Ovary (tissue), 10 donors: ENCODE measurements at regions of chr14 and their contacts with region 1.

Region 1: DNA sequence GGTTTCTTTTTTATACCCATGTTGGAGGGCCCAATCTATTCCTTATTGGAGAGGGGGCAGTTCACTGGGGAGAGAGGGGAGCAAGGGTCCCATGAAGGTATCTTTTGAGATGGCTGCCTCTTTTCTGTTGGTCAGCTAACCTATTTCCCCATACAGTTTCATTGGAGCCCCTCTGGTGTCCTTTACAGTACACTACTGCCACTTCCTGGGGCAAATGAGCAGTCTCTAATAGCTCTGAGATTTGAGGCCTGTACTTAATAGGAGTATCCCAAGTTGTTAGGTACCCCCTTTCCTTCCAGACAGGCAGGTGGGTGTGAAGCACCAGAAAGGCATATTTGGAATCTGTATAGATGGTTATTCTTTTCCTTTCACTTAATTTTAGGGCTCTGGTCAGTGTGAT is 41.3 kb upstream of the RNU6-8 start:
- DNase-seq: no peak
- H3K4me3 ChIP-seq: no peak overlapping the region
- H3K27ac ChIP-seq: no peak overlapping the region
- H3K4me1 ChIP-seq: no peaks in the 10 kb centered on the region
- H3K27me3 ChIP-seq: no peaks in the 10 kb centered on the region
- CTCF ChIP-seq: no peak
- EP300 ChIP-seq: no peak
- POLR2A ChIP-seq: no peak

Region 2: GRCh38 chr14:30402846-30403245 is 1841.6 kb before region 1 on chr14:
- intact Hi-C with region 1: loop called in 1 of 4 experiments (anchors 5 kb)
- DNase-seq: no peak
- H3K4me3 ChIP-seq: no peak overlapping the region
- H3K27ac ChIP-seq: no peak overlapping the region
- H3K4me1 ChIP-seq: no peaks in the 10 kb centered on the region
- H3K27me3 ChIP-seq: no peaks in the 10 kb centered on the region
- CTCF ChIP-seq: no peak
- EP300 ChIP-seq: no peak
- POLR2A ChIP-seq: no peak

Region 3: DNA sequence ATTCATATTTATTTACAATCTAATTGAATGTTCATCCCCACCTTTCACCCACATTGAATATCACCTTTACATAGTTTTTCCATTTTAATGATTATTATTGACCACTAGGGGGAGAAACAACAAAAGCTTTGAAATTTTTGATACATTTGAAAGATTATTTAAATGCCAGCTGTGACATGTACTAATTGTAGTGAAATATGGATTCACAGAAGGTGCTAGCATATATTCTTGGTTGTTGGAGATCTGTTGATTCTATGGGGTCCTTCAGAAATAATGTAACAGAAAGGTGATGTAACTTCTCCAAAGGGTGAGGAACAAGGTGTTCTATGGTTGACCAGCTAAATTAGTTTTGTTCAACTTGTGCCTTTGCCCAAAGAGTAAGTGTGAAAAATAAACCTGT is 734.2 kb before region 1 on chr14:
- intact Hi-C with region 1: loop called in 1 of 4 experiments (anchors 10 kb)
- DNase-seq: no peak
- H3K4me3 ChIP-seq: no peak overlapping the region
- H3K27ac ChIP-seq: no peak overlapping the region
- H3K4me1 ChIP-seq: peaks cover 8% of the 10 kb centered on the region
- H3K27me3 ChIP-seq: no peaks in the 10 kb centered on the region
- CTCF ChIP-seq: peak; percentile 3 to 46 (median 19)
- EP300 ChIP-seq: no peak
- POLR2A ChIP-seq: no peak

Region 4: GRCh38 chr14:31926123-31926522 is 318.3 kb before region 1 on chr14:
- intact Hi-C with region 1: loop called in 1 of 4 experiments (anchors 10 kb)
- DNase-seq: no peak
- H3K4me3 ChIP-seq: no peak overlapping the region
- H3K27ac ChIP-seq: no peak overlapping the region
- H3K4me1 ChIP-seq: peaks cover 2% of the 10 kb centered on the region
- H3K27me3 ChIP-seq: no peaks in the 10 kb centered on the region
- CTCF ChIP-seq: peak in 1 of 3 donors; percentile 30
- EP300 ChIP-seq: no peak
- POLR2A ChIP-seq: no peak

Region 5: DNA sequence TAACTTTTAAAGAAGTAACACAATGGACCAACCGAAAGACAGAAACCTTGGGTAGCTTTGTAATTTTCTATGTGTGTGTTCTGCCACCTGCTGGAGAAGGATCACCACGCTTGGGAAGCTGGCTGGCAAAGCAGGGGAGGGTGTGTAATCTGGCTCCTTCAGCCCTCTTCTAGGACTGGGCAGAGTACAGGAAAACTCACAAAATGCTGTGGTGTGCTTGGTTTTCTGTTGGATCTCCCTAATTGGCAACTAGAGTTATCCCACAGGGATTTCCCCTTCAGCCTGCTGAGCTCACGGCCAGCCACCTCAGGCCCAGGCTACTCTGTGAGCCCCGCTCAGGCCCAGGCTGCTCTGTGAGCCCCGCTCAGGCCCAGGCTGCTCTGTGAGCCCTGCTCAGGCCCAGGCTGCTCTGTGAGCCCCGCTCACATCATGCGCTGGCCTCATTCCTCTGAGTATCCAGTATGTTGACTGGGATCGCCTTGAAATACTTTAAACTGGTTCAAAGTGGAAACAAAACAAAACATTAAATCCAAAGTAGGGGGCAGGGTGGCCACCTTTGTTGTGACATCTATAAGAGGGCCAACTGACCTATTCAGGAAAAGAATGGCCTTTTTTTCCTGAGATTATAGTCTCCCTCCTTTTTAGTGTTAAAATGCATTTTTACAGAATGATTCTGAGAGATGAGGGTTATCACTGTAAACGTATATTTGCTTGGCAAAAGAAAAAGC is 10.7 kb after region 1 on chr14:
- intact Hi-C with region 1: no loop called
- DNase-seq: peak; percentile 72 to 80 (median 74)
- H3K4me3 ChIP-seq: no peak overlapping the region
- H3K27ac ChIP-seq: peak overlapping the region in 1 of 2 donors; percentile 52
- H3K4me1 ChIP-seq: no peaks in the 10 kb centered on the region
- H3K27me3 ChIP-seq: no peaks in the 10 kb centered on the region
- CTCF ChIP-seq: peak; percentile 40 to 77 (median 74)
- EP300 ChIP-seq: no peak
- POLR2A ChIP-seq: no peak

Region 6: DNA sequence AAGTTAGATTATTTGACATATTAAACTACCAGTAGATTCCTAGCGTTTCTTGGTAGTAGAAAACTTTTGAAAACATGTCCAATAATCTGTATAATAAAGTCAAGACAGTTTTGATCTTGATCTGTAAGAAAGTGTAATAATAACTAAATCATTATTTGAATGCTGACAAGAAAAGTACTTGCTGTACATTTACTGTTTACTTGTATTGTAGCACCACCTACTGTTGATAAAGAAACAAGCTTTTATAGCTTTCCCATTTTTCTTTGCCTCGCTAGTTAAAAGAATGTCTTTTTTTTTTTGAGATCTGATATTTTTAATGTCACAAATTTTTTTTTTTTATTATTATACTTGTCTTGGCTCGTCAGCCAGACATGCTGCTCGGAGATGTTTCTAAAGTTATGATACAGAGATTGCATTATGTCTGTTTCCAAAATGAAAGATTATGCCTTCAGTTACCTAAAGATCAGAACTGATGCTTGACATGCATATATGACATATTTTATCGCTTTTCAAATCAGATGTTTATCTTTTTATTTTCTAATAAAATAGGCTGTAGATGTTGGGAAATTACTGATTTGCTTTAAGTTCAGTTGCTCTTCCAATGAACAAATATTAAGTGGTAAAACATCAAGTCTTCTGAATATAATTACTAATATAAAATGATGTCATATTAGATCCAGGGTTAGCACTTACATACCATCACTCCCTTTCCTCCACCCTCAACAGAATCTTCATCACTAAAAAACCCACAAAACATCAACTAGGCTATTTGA is 225.2 kb after region 1 on chr14:
- intact Hi-C with region 1: loop called in 1 of 4 experiments (anchors 10 kb)
- DNase-seq: no peak
- H3K4me3 ChIP-seq: no peak overlapping the region
- H3K27ac ChIP-seq: no peak overlapping the region
- H3K4me1 ChIP-seq: peaks cover 5% of the 10 kb centered on the region
- H3K27me3 ChIP-seq: no peaks in the 10 kb centered on the region
- CTCF ChIP-seq: peak; percentile 25 to 60 (median 35)
- EP300 ChIP-seq: no peak
- POLR2A ChIP-seq: no peak